BJ (cell line): ENCODE measurements at regions of chr6 and their contacts with region 1.

Region 1: DNA sequence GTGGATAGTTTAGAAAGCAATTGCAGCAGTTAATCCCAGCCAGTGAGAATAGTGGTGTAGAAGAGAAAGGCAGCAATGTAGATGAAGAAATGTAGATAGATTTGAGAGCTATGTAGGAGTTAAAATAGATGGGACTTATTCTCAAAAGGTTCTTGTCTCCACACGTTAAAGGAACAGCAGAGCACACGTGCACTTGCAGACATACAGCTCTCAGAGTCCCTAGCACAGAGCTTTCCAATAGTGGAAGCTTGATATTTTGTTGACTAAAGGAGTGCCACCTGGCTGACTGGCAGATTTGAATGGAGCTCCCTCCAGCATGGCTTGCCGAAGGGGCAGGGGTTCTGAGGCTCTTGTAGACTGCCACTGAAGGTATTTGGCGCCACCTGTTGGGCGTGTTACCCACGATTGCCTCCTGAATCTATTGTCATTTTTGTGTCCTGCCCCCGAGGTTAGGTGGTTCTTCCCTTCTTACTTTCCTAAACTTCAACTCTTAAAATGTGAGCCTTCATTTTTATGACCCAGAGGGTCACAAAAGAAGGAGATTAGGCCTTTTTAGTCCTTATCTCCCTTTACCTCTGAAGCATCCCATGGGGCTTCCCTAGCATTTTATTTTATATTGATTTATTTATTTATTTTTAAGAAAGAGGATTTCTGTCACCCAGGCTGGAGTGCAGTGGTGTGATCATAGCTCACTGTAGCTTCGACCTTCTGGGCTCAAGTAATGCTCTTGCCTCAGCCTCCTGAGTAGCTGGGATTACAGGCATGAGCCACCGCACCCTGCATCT is 16.4 kb downstream of the BRD2 start:
- DNase-seq: no peak
- H3K4me3 ChIP-seq: no peak overlapping the region
- H3K27me3 ChIP-seq: no peaks in the 10 kb centered on the region; the same call in none of the 2 replicates
- CTCF ChIP-seq: peak; percentile 87

Region 2: DNA sequence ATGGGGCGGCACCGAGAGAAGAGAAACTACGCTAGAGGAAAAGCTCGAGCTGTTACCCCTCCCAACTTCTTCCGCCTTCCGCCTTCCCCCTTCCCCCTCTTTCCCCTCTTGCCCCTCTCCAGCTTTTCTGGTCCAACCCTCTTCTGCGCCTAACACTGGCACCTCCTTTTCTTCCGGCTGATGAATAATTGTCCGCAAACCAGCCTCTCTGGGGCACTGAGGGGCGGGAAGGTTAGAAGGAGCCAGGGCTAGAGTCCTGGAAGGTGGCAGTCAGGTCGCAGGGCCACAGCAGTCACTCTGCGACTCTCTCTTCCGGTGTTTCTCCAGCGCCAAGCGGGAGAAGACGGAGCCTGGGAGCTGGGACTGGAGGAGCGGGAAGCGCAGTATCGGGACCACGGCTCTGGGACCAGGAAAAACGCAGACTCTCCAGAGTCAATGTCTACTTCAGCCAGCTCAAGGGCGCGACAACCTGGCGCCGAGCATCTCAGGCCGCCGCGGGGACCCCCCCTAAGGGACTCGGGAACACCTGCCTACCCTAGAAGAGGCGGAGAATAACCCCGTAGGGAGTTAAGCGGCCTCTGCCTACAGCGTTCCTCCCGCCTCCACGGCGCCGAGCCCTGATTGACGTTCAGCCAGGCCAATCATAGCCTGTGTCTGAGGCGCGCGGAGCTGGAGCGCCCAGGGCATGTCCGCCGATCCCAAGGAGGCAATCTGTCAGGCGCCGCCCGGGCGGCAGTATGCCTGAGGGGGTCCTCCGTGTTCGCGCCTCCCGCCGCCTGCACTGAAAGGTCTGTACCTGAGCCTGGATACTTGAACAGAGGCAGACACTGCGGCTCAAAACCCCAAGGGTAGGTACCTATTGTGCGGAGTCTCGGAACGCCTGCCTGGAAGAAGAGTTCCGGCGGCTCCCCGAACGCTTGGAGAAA is 90.5 kb before region 1 on chr6:
- CTCF ChIA-PET with region 1: interaction called, 46 read pairs
- POLR2A ChIA-PET with region 1: interaction called, 3 read pairs
- DNase-seq: peak; percentile 61
- H3K4me3 ChIP-seq: peak overlapping the region; percentile 82
- H3K27me3 ChIP-seq: no peaks in the 10 kb centered on the region
- CTCF ChIP-seq: no peak

Region 3: GRCh38 chr6:32920715-32921114 is 64.1 kb before region 1 on chr6:
- CTCF ChIA-PET with region 1: interaction called, 14 read pairs
- POLR2A ChIA-PET with region 1: no interaction called
- DNase-seq: no peak
- H3K4me3 ChIP-seq: no peak overlapping the region
- H3K27me3 ChIP-seq: peaks cover 6% of the 10 kb centered on the region
- CTCF ChIP-seq: no peak

Region 4: GRCh38 chr6:32940656-32941213 is 44.1 kb before region 1 on chr6 and contains the start of gene HLA-DMB:
- CTCF ChIA-PET with region 1: interaction called, 246 read pairs
- POLR2A ChIA-PET with region 1: no interaction called
- DNase-seq: no peak
- H3K4me3 ChIP-seq: no peak within 1 kb of the TSS
- H3K27me3 ChIP-seq: peaks cover 23% of the 10 kb centered on the region
- CTCF ChIP-seq: no peak
- polyA plus RNA-seq, gene HLA-DMB: not detected in 2 replicates

Region 5: DNA sequence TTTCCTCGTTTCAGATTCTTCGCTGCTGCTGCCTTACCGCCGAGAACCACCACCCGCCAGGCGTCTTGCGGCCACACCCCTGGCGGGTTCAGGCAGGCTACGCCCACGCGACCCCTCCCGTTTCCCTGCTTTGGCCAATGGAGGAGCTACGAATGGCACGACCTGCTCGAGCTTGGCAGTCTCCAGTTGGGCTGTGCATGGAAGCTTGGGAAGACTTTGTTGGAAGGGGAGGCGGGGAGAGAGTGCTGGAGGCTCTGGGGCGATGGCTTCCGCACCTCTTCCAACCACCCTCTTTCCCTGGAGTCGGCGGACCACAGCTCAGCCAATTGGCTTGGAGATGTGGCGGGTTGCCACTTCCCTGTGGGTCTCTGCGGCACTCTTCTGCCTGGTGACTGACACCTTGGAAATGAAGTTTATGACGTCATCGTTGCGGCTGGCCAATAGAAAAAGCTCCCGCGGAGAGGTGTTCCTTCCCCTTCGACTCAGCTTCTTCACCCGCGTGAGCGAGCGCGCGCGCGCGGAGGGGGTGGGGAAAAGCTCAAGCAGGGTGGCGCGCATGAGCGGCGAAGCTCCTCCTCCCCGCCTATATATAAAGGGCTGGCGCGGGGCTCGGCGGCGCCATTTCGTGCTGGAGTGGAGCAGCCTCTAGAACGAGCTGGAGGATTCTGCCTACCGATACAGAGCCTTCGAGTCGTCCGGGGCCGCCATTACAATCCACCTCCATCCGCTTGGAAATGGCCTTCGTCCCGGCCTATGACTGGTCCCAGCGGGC is 13.0 kb before region 1 on chr6:
- CTCF ChIA-PET with region 1: interaction called, 31 read pairs
- POLR2A ChIA-PET with region 1: interaction called, 17 read pairs
- DNase-seq: peak; percentile 99
- H3K4me3 ChIP-seq: peak overlapping the region; percentile 94
- H3K27me3 ChIP-seq: no peaks in the 10 kb centered on the region
- CTCF ChIP-seq: no peak

Region 6: GRCh38 chr6:33014841-33015634 is 30.2 kb after region 1 on chr6:
- CTCF ChIA-PET with region 1: interaction called, 13 read pairs
- POLR2A ChIA-PET with region 1: no interaction called
- DNase-seq: peak; percentile 43
- H3K4me3 ChIP-seq: no peak overlapping the region
- H3K27me3 ChIP-seq: peaks cover 26% of the 10 kb centered on the region
- CTCF ChIP-seq: peak; percentile 72